Vagina (tissue), 2 donors: ENCODE measurements at regions of chr1 and their contacts with region 1.

Region 1: GRCh38 chr1:112706908-112707663 is at the start of gene RHOC:
- DNase-seq: no peak
- H3K4me3 ChIP-seq: peak within 1 kb of the TSS; percentile 98 to 99
- H3K27ac ChIP-seq: peak within 1 kb of the TSS; percentile 99
- H3K4me1 ChIP-seq: peaks cover 45% of the 10 kb centered on the region
- H3K27me3 ChIP-seq: no peaks in the 10 kb centered on the region
- CTCF ChIP-seq: peak; percentile 78 to 92 (median 89)
- POLR2A ChIP-seq: peak in 1 of 2 donors; percentile 87
- total RNA-seq, gene RHOC: 251 TPM

Region 2: GRCh38 chr1:112390775-112391602 is 316.1 kb before region 1 on chr1:
- intact Hi-C with region 1: loop called (anchors 5 kb)
- DNase-seq: no peak
- H3K4me3 ChIP-seq: peak overlapping the region; percentile 41 to 47
- H3K27ac ChIP-seq: peak overlapping the region; percentile 96
- H3K4me1 ChIP-seq: peaks cover 44% of the 10 kb centered on the region
- H3K27me3 ChIP-seq: no peaks in the 10 kb centered on the region
- CTCF ChIP-seq: peak; percentile 92 to 96 (median 93)
- POLR2A ChIP-seq: no peak

Region 3: GRCh38 chr1:112619520-112620376 is 87.3 kb before region 1 on chr1 and contains the start of gene CAPZA1:
- intact Hi-C with region 1: loop called (anchors 2 kb)
- DNase-seq: peak in 1 of 2 donors; percentile 93
- H3K4me3 ChIP-seq: peak within 1 kb of the TSS; percentile 97 to 98
- H3K27ac ChIP-seq: peak within 1 kb of the TSS; percentile 99
- H3K4me1 ChIP-seq: peaks cover 57% of the 10 kb centered on the region
- H3K27me3 ChIP-seq: no peaks in the 10 kb centered on the region
- CTCF ChIP-seq: no peak
- POLR2A ChIP-seq: peak in 1 of 2 donors; percentile 83
- total RNA-seq, gene CAPZA1: 126 TPM